IMR-90 (cell line): ENCODE measurements at regions of chr10 and their contacts with region 1.

Region 1: GRCh38 chr10:118241229-118242137 is 100.6 kb downstream of the FAM204A start:
- DNase-seq: peak; percentile 77
- ATAC-seq: peak; percentile 90
- H3K4me3 ChIP-seq: no peak overlapping the region
- H3K27ac ChIP-seq: no peak overlapping the region
- H3K4me1 ChIP-seq: no peaks in the 10 kb centered on the region
- H3K27me3 ChIP-seq: peaks cover 9% of the 10 kb centered on the region
- CTCF ChIP-seq: peak; percentile 94
- POLR2A ChIP-seq: no peak
- RAD21 ChIP-seq: peak; percentile 90

Region 2: DNA sequence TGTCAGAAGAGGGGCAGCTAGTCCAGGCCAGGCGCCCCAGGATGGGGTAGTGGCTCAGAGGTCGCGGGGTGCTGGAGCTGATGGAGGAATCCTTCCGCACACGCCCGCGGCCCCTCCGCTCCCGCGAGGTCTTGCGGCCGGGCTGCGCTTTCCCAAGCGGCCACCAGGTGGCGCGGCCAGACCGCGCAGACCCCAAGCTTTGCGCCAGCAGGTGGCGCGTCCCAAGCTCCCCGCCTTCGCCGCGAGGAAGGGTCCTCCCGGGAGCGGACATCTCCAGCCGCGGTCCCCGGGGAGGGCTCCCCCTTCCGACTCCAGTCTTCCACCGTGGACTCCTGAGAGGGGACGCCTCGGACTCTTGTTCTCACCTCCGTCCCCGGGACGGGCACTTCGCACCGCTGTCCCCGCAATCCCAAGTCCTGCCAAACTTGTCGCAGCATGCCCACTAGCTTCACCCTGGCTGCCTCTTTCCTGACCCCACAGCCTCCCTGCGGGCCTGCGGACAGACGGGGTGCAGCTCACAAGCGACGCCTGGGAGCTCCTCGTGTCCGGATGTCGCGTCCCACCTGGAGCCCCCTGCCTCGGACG is 1024.8 kb before region 1 on chr10:
- CTCF ChIA-PET with region 1: no interaction called
- POLR2A ChIA-PET with region 1: no interaction called
- dilution Hi-C with region 1: no loop called
- in situ Hi-C with region 1: loop called (anchors 25 kb)
- intact Hi-C with region 1: loop called (anchors 2 kb)
- DNase-seq: peak; percentile 57
- ATAC-seq: peak; percentile 96
- H3K4me3 ChIP-seq: peak overlapping the region; percentile 34
- H3K27ac ChIP-seq: no peak overlapping the region
- H3K4me1 ChIP-seq: no peaks in the 10 kb centered on the region
- H3K27me3 ChIP-seq: peaks cover 10% of the 10 kb centered on the region
- CTCF ChIP-seq: peak; percentile 100
- POLR2A ChIP-seq: no peak
- RAD21 ChIP-seq: peak; percentile 91

Region 3: DNA sequence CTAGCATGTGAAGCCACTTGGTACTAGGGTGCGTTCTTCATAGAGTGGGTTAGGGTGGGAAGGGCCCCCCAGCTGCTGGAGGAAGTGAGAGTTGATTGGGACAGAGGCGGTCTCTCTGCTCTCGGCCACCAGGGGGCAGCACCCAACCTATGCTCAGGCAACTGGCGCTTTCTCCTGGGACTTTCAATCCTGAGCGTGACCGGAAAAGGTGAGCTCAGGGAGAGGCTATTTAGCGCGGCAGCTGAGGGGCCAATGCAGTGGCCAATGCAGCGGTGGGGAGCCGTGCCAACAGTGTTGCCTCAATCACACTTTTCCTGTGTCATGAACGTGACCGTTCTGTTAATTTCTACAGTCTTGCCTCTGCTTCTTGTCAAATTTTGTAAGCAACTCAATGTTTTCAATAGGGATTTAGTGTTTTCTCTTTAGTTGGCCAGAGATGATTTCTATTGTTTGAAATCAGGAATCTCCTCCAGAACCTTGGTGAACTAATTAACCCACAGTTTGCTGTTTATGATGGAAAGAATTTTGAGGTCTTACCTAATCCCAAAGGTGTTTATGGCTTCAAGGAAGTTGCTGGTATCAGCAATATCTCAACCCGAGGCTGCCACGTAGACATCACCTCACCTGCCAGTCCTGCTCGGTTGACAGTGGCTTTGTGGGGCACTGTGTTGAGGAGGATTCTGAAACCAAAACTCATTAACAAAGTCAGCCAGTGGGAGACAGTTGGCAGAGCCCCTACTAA is 798.4 kb before region 1 on chr10:
- CTCF ChIA-PET with region 1: no interaction called
- POLR2A ChIA-PET with region 1: no interaction called
- dilution Hi-C with region 1: no loop called
- in situ Hi-C with region 1: no loop called
- intact Hi-C with region 1: loop called (anchors 2 kb)
- DNase-seq: peak; percentile 32
- ATAC-seq: peak; percentile 53; the same call in 1 of the 2 replicates
- H3K4me3 ChIP-seq: no peak overlapping the region
- H3K27ac ChIP-seq: no peak overlapping the region
- H3K4me1 ChIP-seq: no peaks in the 10 kb centered on the region
- H3K27me3 ChIP-seq: no peaks in the 10 kb centered on the region
- CTCF ChIP-seq: peak; percentile 52
- POLR2A ChIP-seq: no peak
- RAD21 ChIP-seq: peak; percentile 43

Region 4: GRCh38 chr10:117537436-117537903 is 704.0 kb before region 1 on chr10:
- CTCF ChIA-PET with region 1: interaction called, 3 read pairs
- POLR2A ChIA-PET with region 1: no interaction called
- dilution Hi-C with region 1: no loop called
- in situ Hi-C with region 1: loop called (anchors 5 kb)
- intact Hi-C with region 1: loop called (anchors 1 kb)
- DNase-seq: no peak
- ATAC-seq: peak; percentile 74
- H3K4me3 ChIP-seq: no peak overlapping the region
- H3K27ac ChIP-seq: no peak overlapping the region
- H3K4me1 ChIP-seq: no peaks in the 10 kb centered on the region
- H3K27me3 ChIP-seq: peaks cover 92% of the 10 kb centered on the region
- CTCF ChIP-seq: peak; percentile 67
- POLR2A ChIP-seq: no peak
- RAD21 ChIP-seq: peak; percentile 70

Region 5: GRCh38 chr10:117860823-117861222 is 380.7 kb before region 1 on chr10:
- CTCF ChIA-PET with region 1: no interaction called
- POLR2A ChIA-PET with region 1: no interaction called
- dilution Hi-C with region 1: no loop called
- in situ Hi-C with region 1: no loop called
- intact Hi-C with region 1: loop called (anchors 10 kb)
- DNase-seq: peak; percentile 1
- ATAC-seq: no peak
- H3K4me3 ChIP-seq: no peak overlapping the region
- H3K27ac ChIP-seq: no peak overlapping the region
- H3K4me1 ChIP-seq: no peaks in the 10 kb centered on the region
- H3K27me3 ChIP-seq: no peaks in the 10 kb centered on the region
- CTCF ChIP-seq: no peak; the same call in 1 of the 2 replicates
- POLR2A ChIP-seq: no peak
- RAD21 ChIP-seq: no peak

Region 6: DNA sequence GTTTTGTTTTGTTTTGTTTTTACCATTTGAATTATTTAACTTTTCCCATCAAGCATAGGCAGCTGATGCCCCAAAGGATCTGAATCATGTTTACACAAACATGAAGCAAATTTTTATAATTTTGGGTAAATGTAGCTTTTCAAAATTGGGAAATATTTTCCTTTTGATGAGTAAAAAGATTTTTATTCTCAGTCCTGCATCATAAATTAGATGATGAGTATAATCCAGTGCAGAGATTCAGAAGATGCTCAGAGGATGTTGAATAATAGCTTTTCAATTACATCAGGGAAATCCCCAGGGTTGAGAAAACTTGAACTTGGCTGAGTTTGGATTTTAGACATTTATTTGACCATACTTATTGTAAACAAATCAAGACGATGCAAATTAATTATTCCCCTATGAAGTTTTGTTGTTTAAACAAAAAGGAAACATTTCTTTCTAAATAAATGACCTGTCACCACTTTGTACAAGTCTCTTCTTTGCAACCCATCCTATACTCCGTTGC is 21.1 kb before region 1 on chr10:
- CTCF ChIA-PET with region 1: no interaction called
- POLR2A ChIA-PET with region 1: no interaction called
- dilution Hi-C with region 1: no loop called
- in situ Hi-C with region 1: no loop called
- intact Hi-C with region 1: no loop called
- DNase-seq: no peak
- ATAC-seq: no peak
- H3K4me3 ChIP-seq: no peak overlapping the region
- H3K27ac ChIP-seq: no peak overlapping the region
- H3K4me1 ChIP-seq: no peaks in the 10 kb centered on the region
- H3K27me3 ChIP-seq: no peaks in the 10 kb centered on the region
- CTCF ChIP-seq: no peak
- POLR2A ChIP-seq: no peak
- RAD21 ChIP-seq: no peak

Region 7: GRCh38 chr10:118423800-118424479 is 182.5 kb after region 1 on chr10:
- CTCF ChIA-PET with region 1: no interaction called
- POLR2A ChIA-PET with region 1: no interaction called
- dilution Hi-C with region 1: no loop called
- in situ Hi-C with region 1: no loop called
- intact Hi-C with region 1: loop called (anchors 2 kb)
- DNase-seq: peak; percentile 81
- ATAC-seq: peak; percentile 96
- H3K4me3 ChIP-seq: no peak overlapping the region
- H3K27ac ChIP-seq: no peak overlapping the region
- H3K4me1 ChIP-seq: no peaks in the 10 kb centered on the region
- H3K27me3 ChIP-seq: no peaks in the 10 kb centered on the region
- CTCF ChIP-seq: peak; percentile 78
- POLR2A ChIP-seq: no peak
- RAD21 ChIP-seq: peak; percentile 68

Region 8: GRCh38 chr10:118459726-118460193 is 218.3 kb after region 1 on chr10:
- CTCF ChIA-PET with region 1: no interaction called
- POLR2A ChIA-PET with region 1: no interaction called
- dilution Hi-C with region 1: no loop called
- in situ Hi-C with region 1: no loop called
- intact Hi-C with region 1: loop called (anchors 1 kb)
- DNase-seq: peak; percentile 39
- ATAC-seq: peak; percentile 98
- H3K4me3 ChIP-seq: no peak overlapping the region
- H3K27ac ChIP-seq: no peak overlapping the region
- H3K4me1 ChIP-seq: no peaks in the 10 kb centered on the region
- H3K27me3 ChIP-seq: no peaks in the 10 kb centered on the region
- CTCF ChIP-seq: peak; percentile 69
- POLR2A ChIP-seq: no peak
- RAD21 ChIP-seq: peak; percentile 67